AG04450 (cell line): ENCODE measurements at regions of chr9 and their contacts with region 1.

Region 1: GRCh38 chr9:84668196-84669012 is 1.1 kb upstream of the NTRK2 start:
- DNase-seq: no peak
- H3K4me3 ChIP-seq: peak overlapping the region; percentile 31
- H3K27ac ChIP-seq: no peak overlapping the region
- H3K27me3 ChIP-seq: peaks cover 23% of the 10 kb centered on the region
- CTCF ChIP-seq: peak; percentile 36

Region 2: DNA sequence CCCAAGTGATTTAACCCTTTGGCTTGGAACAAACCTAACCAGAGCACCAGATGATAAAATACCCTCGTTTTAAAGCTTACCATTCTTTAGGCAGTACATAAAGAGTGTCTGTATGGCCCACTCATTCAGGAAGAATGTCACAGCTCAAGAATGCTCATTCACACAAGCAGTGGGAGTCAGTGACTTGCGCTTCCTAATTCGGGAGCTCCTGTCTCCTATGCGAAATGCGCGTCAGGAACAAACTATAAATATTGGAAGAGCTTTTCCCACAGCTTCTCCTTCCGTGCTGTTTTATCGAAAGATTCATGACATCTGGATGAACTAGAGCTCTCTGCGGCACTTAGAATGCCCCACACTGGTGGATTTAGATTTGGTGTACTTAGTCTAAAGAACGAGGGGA is 67.7 kb after region 1 on chr9:
- CTCF ChIA-PET with region 1: interaction called, 10 read pairs
- POLR2A ChIA-PET with region 1: no interaction called
- DNase-seq: no peak
- H3K4me3 ChIP-seq: no peak overlapping the region
- H3K27ac ChIP-seq: no peak overlapping the region
- H3K27me3 ChIP-seq: no peaks in the 10 kb centered on the region
- CTCF ChIP-seq: no peak

Region 3: DNA sequence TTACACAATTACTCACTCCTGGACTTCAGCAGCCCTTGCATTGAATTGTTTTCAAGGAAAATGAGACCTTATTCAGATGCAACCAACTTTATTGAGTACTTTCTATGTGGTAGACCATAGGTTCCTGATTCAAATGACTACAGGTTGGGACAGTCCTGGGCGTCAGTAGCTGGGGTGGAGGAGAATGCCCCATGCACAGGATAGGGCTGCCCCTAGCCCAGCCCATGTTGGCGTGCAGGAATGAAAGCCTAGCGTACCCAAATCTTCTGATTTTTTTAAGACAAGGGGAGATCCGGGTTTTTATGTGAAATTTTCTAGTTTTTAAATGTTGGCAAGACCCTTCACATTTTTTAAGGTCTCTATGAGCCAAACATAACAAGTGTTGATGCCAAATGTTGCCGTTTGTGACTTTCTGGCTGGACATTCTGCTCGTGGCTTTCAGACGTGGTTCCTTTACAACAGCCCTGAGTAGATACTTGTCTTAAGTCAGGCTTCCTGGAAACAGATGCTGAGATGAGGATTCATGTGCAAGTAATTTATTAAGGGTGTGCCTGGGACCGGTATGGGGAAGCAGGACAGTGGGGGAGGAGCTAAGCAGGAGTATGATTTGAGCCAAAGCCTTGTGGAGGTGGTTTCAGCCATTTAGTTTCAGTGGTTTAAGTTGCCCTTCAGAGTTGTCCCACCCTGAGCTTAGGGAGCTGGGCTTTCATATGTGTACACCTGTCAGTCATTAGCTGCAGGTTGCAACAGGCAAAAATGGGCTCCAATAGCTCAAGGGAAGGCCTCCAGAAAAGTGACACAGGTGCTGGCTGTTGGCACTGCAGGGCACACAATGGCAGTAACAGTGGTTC is 155.2 kb after region 1 on chr9:
- CTCF ChIA-PET with region 1: no interaction called
- POLR2A ChIA-PET with region 1: no interaction called
- DNase-seq: no peak
- H3K4me3 ChIP-seq: no peak overlapping the region
- H3K27ac ChIP-seq: no peak overlapping the region
- H3K27me3 ChIP-seq: no peaks in the 10 kb centered on the region
- CTCF ChIP-seq: no peak